Activated CD8-positive, alpha-beta memory T cell treated with anti-CD3 and anti-CD28 coated beads, Interleukin-2, amount 10 ng/mL, durations not matched to agents 7 days and 5 days (primary cell): ENCODE measurements at regions of chr7 and their contacts with region 1.

Region 1: GRCh38 chr7:55964261-55965099 is at the start of gene NIPSNAP2:
- DNase-seq: peak; percentile 59
- ATAC-seq: peak; percentile 88
- H3K4me3 Mint-ChIP-seq: peak within 1 kb of the TSS; percentile 75
- H3K27ac Mint-ChIP-seq: peak within 1 kb of the TSS; percentile 80
- H3K4me1 Mint-ChIP-seq: peaks cover 31% of the 10 kb centered on the region
- H3K27me3 Mint-ChIP-seq: no peaks in the 10 kb centered on the region
- total RNA-seq, gene NIPSNAP2: 28.6 to 29.0 TPM

Region 2: DNA sequence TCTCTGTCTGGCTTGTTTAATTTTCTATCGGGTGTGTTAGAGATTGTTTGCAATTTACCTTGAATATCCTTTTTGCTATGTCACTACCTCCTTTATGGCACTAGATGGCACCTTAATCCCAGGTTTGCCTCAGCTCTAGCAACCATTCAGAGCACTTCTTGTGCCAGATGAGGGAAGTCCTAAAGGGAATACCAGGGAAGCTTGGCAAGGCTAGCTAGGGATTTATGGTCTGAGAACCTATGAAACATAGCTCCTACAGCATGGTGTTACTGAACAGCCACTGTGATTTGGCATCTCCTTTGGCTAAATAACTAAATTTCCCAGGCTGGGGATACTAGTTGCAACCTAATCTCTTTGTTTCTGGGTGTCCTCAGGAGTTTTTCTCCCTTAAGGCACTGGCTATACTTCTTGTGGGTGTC is 323.2 kb before region 1 on chr7:
- CTCF ChIA-PET with region 1: interaction called, 19 read pairs
- DNase-seq: peak; percentile 52
- ATAC-seq: peak; percentile 88
- H3K4me3 Mint-ChIP-seq: no peak overlapping the region
- H3K27ac Mint-ChIP-seq: peak overlapping the region; percentile 65
- H3K4me1 Mint-ChIP-seq: peaks cover 14% of the 10 kb centered on the region
- H3K27me3 Mint-ChIP-seq: peaks cover 13% of the 10 kb centered on the region

Region 3: GRCh38 chr7:55951637-55952351 is 12.7 kb before region 1 on chr7 and contains the start of gene MRPS17:
- CTCF ChIA-PET with region 1: interaction called, 14 read pairs
- DNase-seq: peak; percentile 94
- ATAC-seq: peak; percentile 100
- H3K4me3 Mint-ChIP-seq: peak within 1 kb of the TSS; percentile 93
- H3K27ac Mint-ChIP-seq: peak within 1 kb of the TSS; percentile 87
- H3K4me1 Mint-ChIP-seq: peaks cover 24% of the 10 kb centered on the region
- H3K27me3 Mint-ChIP-seq: no peaks in the 10 kb centered on the region
- total RNA-seq, gene MRPS17: 14.3 to 20.3 TPM

Region 4: GRCh38 chr7:56447864-56448693 is 483.6 kb after region 1 on chr7:
- CTCF ChIA-PET with region 1: no interaction called
- DNase-seq: no peak
- ATAC-seq: no peak
- H3K4me3 Mint-ChIP-seq: no peak overlapping the region
- H3K27ac Mint-ChIP-seq: no peak overlapping the region
- H3K4me1 Mint-ChIP-seq: no peaks in the 10 kb centered on the region
- H3K27me3 Mint-ChIP-seq: no peaks in the 10 kb centered on the region